ENCODE measurements at regions of chr10 and their contacts with region 1.

Region 1: DNA sequence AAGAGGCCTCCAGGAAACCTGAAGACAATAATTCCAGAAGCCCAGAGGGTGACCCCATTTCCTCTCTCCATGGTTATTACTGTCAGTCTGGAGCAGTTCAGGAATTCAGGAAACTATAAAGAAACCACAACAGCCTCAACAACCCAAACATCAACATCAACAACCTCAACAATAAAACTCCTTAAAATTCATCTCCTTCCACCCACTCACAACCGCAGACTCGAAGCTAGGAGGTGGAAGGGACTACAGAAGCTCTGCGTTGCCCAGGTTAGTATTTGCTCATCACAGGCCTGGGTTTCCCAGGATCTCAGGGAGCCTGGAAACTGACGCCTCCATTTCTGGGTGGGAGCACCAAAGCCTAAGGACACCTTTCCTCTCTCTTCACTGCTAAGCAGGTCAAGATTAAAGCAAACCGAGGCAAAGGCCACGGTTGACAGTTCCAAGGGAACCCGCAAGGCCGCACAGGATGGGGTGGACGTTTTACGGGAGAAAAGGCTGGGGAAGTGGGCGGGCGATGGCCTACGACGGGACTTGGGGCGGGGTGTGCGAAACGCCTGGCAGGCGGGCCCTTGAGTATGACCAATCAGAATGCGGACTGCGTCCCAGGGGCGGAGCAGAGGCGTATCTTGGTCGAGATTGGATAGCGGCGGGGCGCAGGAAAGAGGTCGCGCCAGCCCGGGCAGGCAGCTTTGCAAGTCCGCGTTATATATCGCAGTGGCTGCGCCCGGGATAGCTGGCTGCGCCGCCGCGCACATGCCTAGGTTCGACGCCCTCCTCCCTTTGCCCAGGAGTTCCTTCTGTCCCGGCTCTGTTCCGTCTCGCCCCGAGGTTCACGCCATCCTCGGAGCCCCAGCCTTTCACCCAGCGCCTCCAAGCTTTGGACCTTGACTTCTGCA is at the start of gene ELOVL3:
- DNase-seq: peak; percentile 97
- ATAC-seq: peak; percentile 97
- total RNA-seq, gene ELOVL3: not detected

Region 2: DNA sequence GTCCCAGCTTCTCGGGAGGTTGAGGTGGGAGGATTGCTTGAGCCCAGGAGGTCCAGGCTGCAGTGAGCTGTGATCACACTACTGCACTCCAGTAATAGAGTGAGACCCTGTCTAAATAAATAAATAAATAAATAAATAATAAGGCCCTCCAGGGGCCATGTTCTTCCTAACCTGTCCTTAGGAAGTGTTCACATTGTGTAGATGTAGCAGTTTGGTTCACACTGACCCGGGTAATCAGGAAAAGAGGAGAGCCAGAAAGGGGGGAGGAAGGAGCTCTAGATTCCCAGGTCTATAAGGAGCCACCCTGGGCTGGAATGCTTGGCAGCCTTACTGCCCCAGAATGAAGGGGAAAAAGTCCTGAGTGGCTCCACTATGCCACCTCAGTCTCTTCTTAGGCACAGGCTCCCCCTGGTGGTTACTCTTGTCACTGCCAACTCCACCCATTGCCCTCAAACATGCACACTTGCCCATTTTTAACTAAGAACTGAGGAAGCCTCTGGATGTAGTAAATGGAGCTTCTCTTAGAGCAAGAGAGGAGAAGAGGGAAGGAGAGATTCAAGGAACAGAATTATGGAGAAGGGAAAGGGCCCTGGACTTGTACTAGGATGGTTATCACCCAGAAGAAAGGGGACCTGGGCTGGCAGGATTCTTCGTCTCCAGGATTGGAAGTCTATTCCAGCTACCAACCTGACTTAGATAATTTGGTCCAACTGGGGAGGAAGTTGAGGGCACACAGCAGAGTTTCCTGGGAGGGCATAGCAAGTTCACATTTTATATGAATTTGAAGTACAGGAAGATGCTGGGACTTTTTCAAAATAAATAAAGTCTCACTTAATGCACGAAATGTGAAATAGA is 153.0 kb before region 1 on chr10:
- intact Hi-C with region 1: no loop called
- DNase-seq: no peak
- ATAC-seq: peak; percentile 79

Region 3: DNA sequence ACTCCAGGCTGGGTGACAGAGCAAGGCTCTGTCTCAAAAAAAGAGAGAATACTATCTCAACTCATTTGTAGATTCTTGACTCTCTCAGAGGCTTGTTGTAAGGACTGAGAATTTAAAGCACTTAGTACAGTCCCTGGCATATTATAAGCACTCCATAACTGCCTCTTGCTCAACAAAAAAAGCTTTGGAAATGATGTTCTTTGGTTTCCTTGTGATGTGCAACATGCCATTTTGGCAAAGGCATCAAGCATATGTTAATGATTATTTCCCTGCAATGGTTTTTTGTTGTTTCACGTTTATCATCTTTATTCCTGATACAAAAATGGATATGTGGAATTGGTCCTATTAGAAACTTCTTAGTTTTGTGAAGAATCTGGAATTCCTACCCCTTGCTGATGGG is 58.0 kb before region 1 on chr10:
- intact Hi-C with region 1: loop called (anchors 5 kb)
- DNase-seq: no peak
- ATAC-seq: no peak

Region 4: GRCh38 chr10:102352066-102352715 is 126.3 kb after region 1 on chr10:
- intact Hi-C with region 1: loop called (anchors 1 kb)
- DNase-seq: no peak
- ATAC-seq: no peak

Region 5: DNA sequence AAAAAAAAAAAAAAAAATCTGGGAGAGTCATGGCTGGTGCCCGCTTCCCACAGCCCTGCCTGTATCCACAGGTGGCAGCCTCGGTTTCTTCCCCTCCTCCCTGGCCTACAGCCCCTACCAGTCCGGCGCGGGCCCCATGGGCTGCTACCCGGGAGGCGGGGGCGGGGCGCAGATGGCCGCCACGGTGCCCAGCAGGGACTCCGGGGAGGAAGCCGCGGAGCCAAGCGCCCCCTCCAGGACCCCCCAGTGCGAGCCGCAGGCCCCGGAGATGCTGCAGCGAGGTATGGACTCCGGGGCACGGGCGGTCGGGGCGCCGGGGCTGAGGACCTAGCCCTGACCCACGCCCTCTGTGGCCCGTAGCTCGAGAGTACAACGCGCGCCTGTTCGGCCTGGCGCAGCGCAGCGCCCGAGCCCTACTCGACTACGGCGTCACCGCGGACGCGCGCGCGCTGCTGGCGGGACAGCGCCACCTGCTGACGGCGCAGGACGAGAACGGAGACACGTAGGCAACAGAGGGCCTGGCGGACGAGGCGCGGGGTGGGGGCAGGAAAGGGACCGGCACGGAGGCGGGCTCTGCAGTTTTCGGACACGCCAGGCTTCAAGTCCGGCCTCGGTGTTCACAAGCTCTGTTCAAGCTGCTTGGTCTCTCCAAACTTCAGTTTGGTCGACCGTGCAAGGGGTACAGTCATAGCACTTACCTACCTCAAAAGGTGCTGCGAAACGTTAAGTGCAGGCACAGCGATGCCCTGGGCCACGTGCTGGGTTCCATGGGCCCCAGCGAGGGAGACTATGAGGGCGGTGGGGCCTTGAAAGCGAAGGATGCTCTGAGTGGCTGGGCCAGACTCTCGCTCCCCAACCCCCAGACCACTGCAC is 173.6 kb after region 1 on chr10:
- intact Hi-C with region 1: loop called (anchors 2 kb)
- DNase-seq: peak; percentile 97
- ATAC-seq: peak; percentile 79

Region 6: GRCh38 chr10:102476466-102477141 is 250.7 kb after region 1 on chr10:
- intact Hi-C with region 1: loop called (anchors 5 kb)
- DNase-seq: no peak
- ATAC-seq: no peak

Region 7: DNA sequence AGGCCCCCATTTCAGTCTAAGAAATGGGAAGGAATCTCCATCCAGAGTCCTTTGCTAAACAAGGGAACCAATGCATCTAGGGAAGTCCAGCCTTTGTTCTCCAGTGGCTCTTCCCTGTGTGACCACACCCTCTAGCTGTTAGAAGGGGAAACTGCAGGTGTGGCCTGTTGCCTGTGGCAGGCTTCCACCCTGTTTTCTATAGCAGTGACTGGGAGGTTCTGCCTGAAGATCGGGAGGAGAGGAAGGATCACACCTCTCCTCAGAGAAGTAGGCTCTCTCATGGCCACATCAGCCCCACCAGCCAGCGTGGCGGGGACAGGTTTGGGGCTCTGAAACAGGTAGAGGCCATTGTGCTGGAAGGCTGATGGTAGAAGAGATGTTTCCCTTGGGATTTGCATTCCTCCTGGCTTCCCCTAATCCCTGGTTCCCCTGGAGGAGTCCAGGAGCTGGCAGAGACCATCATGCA is 370.6 kb after region 1 on chr10:
- intact Hi-C with region 1: loop called (anchors 10 kb)
- DNase-seq: no peak
- ATAC-seq: peak; percentile 43